Body of pancreas (tissue), 4 donors: ENCODE measurements at regions of chr2 and their contacts with region 1.

Region 1: DNA sequence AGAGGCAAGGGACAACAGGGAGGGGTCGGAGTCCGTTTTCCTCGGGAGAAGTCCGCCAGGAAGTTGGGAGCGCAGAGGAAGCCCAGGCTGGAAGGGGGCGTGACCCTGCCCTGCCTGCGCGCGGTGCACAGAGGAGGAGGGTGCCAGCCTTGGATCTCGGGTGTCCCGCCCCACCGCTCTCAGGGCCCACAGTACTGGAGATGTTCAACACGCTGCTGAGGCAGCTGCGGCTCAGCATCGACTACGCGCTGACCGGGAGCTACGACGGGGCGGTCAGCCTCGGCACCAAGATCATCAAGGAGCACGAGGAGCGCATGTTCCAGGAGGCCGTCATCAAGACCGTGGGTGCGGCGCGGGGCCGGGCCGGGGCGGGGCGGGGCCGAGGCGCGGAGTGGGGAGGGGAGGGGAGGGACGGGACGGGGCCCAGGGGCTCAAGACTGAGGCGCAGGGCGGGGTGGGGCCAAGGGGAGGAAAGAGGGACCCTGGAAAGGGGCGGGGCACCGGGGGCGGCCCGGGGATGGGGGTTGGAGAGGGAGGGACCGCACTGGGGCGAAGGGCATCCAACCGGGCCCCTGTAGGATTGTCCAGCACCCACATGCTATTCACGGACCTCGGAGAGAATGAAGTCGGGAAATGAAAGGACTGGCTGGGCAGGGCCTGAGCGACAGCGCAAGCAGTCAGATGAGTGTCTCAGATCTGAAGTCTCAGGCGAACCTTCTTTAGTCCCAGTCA is 36.6 kb downstream of the POMC start:
- DNase-seq: peak in 1 of 4 donors; percentile 20
- ATAC-seq: no peak
- H3K4me3 ChIP-seq: no peak overlapping the region
- H3K27ac ChIP-seq: no peak overlapping the region
- H3K4me1 ChIP-seq: peaks cover 6% of the 10 kb centered on the region
- H3K27me3 ChIP-seq: no peaks in the 10 kb centered on the region
- CTCF ChIP-seq: no peak
- POLR2A ChIP-seq: no peak

Region 2: GRCh38 chr2:24984912-24985311 is 146.8 kb before region 1 on chr2:
- intact Hi-C with region 1: loop called (anchors 5 kb)
- DNase-seq: peak in 3 of 4 donors; percentile 15 to 44 (median 16)
- ATAC-seq: no peak
- H3K4me3 ChIP-seq: no peak overlapping the region
- H3K27ac ChIP-seq: no peak overlapping the region
- H3K4me1 ChIP-seq: peaks cover 7% of the 10 kb centered on the region
- H3K27me3 ChIP-seq: no peaks in the 10 kb centered on the region
- CTCF ChIP-seq: no peak
- POLR2A ChIP-seq: no peak

Region 3: GRCh38 chr2:25460261-25460905 is 328.6 kb after region 1 on chr2:
- intact Hi-C with region 1: no loop called
- DNase-seq: no peak
- ATAC-seq: no peak
- H3K4me3 ChIP-seq: no peak overlapping the region
- H3K27ac ChIP-seq: no peak overlapping the region
- H3K4me1 ChIP-seq: no peaks in the 10 kb centered on the region
- H3K27me3 ChIP-seq: no peaks in the 10 kb centered on the region
- CTCF ChIP-seq: no peak
- POLR2A ChIP-seq: no peak

Region 4: GRCh38 chr2:25740810-25741381 is 609.2 kb after region 1 on chr2:
- intact Hi-C with region 1: no loop called
- DNase-seq: peak in 2 of 4 donors; percentile 17 to 57
- ATAC-seq: peak; percentile 86
- H3K4me3 ChIP-seq: no peak overlapping the region
- H3K27ac ChIP-seq: peak overlapping the region; percentile 54 to 83 (median 72)
- H3K4me1 ChIP-seq: peaks cover 44% of the 10 kb centered on the region
- H3K27me3 ChIP-seq: no peaks in the 10 kb centered on the region
- CTCF ChIP-seq: no peak
- POLR2A ChIP-seq: no peak